SK-N-SH (cell line): ENCODE measurements at regions of chr5 and their contacts with region 1.

Region 1: GRCh38 chr5:15003511-15003920 is 131.9 kb upstream of the ANKH start:
- DNase-seq: peak; percentile 85
- H3K4me3 ChIP-seq: peak overlapping the region in 1 of 2 experiments; percentile 38; a peak in 1 of 4 replicates
- H3K27ac ChIP-seq: no peak overlapping the region
- H3K4me1 ChIP-seq: peaks cover 0 to 7% of the 10 kb centered on the region in 2 experiments; a peak in 3 of 4 replicates
- H3K27me3 ChIP-seq: no peaks in the 10 kb centered on the region
- CTCF ChIP-seq: peak; percentile 89
- EP300 ChIP-seq: no peak
- RAD21 ChIP-seq: peak; percentile 96

Region 2: GRCh38 chr5:14640765-14641164 is 362.8 kb before region 1 on chr5:
- CTCF ChIA-PET with region 1: no interaction called
- POLR2A ChIA-PET with region 1: no interaction called
- DNase-seq: no peak
- H3K4me3 ChIP-seq: no peak overlapping the region
- H3K27ac ChIP-seq: no peak overlapping the region
- H3K4me1 ChIP-seq: no peaks in the 10 kb centered on the region
- H3K27me3 ChIP-seq: peaks cover 6% of the 10 kb centered on the region; the same call in 1 of the 2 replicates
- CTCF ChIP-seq: no peak
- EP300 ChIP-seq: no peak
- RAD21 ChIP-seq: no peak

Region 3: GRCh38 chr5:14685757-14686156 is 317.8 kb before region 1 on chr5:
- CTCF ChIA-PET with region 1: interaction called, 41 read pairs
- POLR2A ChIA-PET with region 1: no interaction called
- DNase-seq: peak; percentile 69
- H3K4me3 ChIP-seq: no peak overlapping the region
- H3K27ac ChIP-seq: no peak overlapping the region; a peak in 1 of 4 replicates
- H3K4me1 ChIP-seq: peaks cover 0 to 11% of the 10 kb centered on the region in 2 experiments; a peak in 2 of 4 replicates
- H3K27me3 ChIP-seq: no peaks in the 10 kb centered on the region
- CTCF ChIP-seq: peak; percentile 73
- EP300 ChIP-seq: no peak
- RAD21 ChIP-seq: peak; percentile 85

Region 4: DNA sequence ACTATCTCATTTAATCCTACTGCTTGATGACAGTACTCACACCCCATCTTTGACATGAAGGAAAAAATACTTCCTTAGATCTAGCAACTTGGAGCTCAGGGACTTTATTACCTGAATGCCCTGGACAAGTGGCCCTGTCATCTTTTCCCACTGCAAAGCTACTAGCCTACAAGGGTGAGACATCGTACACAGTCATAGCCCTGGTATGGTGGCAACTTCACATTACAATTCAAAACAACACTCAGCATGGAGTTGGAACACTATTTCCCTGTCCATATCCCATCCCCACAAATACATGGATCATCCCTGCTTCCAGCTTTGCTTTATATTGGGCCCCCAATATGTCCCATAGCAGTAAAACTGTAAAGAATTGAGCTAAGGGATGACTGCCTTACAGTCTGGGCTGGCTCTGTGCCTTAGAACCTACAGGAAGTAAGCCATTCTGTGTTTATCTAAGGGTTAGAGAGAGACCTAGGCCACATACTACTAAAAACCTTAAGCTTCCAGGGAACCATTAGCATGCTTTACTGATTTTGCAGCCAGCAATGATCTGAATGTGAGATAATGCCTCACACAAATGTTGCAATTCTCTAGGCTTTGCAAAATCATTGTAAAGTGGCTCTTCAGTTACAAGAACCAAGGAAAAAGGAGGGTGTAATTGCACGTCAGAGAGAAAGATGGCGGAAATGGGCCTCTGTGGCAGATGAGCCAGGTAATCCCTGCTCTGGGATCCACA is 283.1 kb before region 1 on chr5:
- CTCF ChIA-PET with region 1: interaction called, 203 read pairs
- POLR2A ChIA-PET with region 1: no interaction called
- DNase-seq: no peak
- H3K4me3 ChIP-seq: no peak overlapping the region
- H3K27ac ChIP-seq: peak overlapping the region in 1 of 2 experiments; percentile 26; a peak in 2 of 4 replicates
- H3K4me1 ChIP-seq: peaks cover 0 to 6% of the 10 kb centered on the region in 2 experiments; a peak in 1 of 4 replicates
- H3K27me3 ChIP-seq: no peaks in the 10 kb centered on the region
- CTCF ChIP-seq: no peak
- EP300 ChIP-seq: no peak
- RAD21 ChIP-seq: no peak

Region 5: GRCh38 chr5:14732991-14733390 is 270.5 kb before region 1 on chr5:
- CTCF ChIA-PET with region 1: interaction called, 203 read pairs
- POLR2A ChIA-PET with region 1: no interaction called
- DNase-seq: no peak
- H3K4me3 ChIP-seq: no peak overlapping the region
- H3K27ac ChIP-seq: no peak overlapping the region
- H3K4me1 ChIP-seq: no peaks in the 10 kb centered on the region
- H3K27me3 ChIP-seq: no peaks in the 10 kb centered on the region
- CTCF ChIP-seq: no peak
- EP300 ChIP-seq: no peak
- RAD21 ChIP-seq: no peak

Region 6: DNA sequence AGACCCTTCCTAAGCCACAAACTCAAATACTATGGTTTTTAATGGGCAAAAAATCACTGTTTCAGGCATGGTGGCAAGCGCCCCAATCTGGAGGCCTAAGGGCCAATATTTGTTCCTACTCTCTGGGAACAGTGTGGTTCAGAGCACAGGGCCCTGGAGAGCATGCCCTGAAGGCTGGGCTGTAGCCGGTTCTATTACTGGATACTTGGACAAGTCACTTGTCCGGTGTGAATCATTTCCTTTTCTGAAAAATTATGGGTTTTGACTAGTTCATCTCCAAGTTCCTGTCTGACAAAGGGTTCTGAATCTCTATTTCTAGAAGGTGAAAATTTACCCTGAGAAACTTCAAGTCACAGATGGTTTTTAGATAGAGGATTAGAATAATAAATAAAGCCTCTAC is 264.0 kb before region 1 on chr5:
- CTCF ChIA-PET with region 1: interaction called, 11 read pairs
- POLR2A ChIA-PET with region 1: no interaction called
- DNase-seq: no peak
- H3K4me3 ChIP-seq: no peak overlapping the region
- H3K27ac ChIP-seq: peak overlapping the region in 1 of 2 experiments; percentile 73; a peak in 2 of 4 replicates
- H3K4me1 ChIP-seq: peaks cover 0 to 25% of the 10 kb centered on the region in 2 experiments; a peak in 2 of 4 replicates
- H3K27me3 ChIP-seq: no peaks in the 10 kb centered on the region
- CTCF ChIP-seq: no peak
- EP300 ChIP-seq: no peak
- RAD21 ChIP-seq: no peak

Region 7: GRCh38 chr5:14871210-14872069 is 132.1 kb before region 1 on chr5 and contains the start of gene ANKH:
- CTCF ChIA-PET with region 1: interaction called, 31 read pairs
- POLR2A ChIA-PET with region 1: no interaction called
- DNase-seq: peak; percentile 94
- H3K4me3 ChIP-seq: peak within 1 kb of the TSS; percentile 69 to 93
- H3K27ac ChIP-seq: peak within 1 kb of the TSS; percentile 56 to 67
- H3K4me1 ChIP-seq: peaks cover 0 to 13% of the 10 kb centered on the region in 2 experiments; a peak in 2 of 4 replicates
- H3K27me3 ChIP-seq: no peaks in the 10 kb centered on the region
- CTCF ChIP-seq: no peak
- EP300 ChIP-seq: peak in 1 of 2 experiments; percentile 46; a peak in 1 of 4 replicates
- RAD21 ChIP-seq: no peak
- polyA plus RNA-seq, gene ANKH: 14.8 and 22.0 TPM in 2 replicates

Region 8: DNA sequence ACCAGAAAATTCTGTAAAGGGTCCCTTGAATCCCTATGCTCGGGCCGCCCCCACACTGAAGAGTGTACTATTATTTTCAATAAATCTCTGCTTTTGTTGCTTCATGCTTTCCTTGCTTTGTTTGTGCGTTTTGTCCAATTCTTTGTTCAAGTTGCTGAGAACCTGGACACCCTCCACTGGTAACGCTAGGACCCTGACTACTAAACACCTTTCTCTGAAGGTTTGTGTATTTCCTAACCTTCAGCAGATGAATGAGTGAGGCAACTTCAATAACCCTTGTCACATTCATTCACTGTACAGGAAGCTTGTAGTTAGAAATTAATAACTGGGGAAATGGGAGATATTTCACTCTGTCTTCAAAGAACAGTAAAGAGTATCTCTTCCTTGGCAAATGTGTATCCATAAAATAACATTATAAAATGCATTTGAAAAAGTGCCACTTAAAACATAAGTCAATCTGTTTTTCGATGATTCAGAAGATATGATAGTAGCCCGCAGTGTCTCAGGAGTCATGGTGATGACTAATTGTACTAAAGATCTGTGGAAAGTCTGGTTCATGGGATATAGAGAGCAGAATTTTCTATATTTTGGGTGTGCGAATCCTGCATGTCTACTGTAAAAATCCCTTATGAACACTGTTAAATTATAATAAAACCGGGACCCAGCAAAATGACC is 88.8 kb before region 1 on chr5:
- CTCF ChIA-PET with region 1: no interaction called
- POLR2A ChIA-PET with region 1: no interaction called
- DNase-seq: no peak
- H3K4me3 ChIP-seq: no peak overlapping the region
- H3K27ac ChIP-seq: peak overlapping the region in 1 of 2 experiments; percentile 87; a peak in 2 of 4 replicates
- H3K4me1 ChIP-seq: peaks cover 15 to 17% of the 10 kb centered on the region in 2 experiments
- H3K27me3 ChIP-seq: no peaks in the 10 kb centered on the region
- CTCF ChIP-seq: no peak
- EP300 ChIP-seq: peak in 1 of 2 experiments; percentile 12; a peak in 1 of 4 replicates
- RAD21 ChIP-seq: no peak

Region 9: GRCh38 chr5:14932984-14933383 is 70.5 kb before region 1 on chr5:
- CTCF ChIA-PET with region 1: no interaction called
- POLR2A ChIA-PET with region 1: no interaction called
- DNase-seq: no peak
- H3K4me3 ChIP-seq: no peak overlapping the region
- H3K27ac ChIP-seq: no peak overlapping the region
- H3K4me1 ChIP-seq: no peaks in the 10 kb centered on the region; a peak in 2 of 4 replicates
- H3K27me3 ChIP-seq: no peaks in the 10 kb centered on the region
- CTCF ChIP-seq: no peak
- EP300 ChIP-seq: no peak
- RAD21 ChIP-seq: no peak

Region 10: GRCh38 chr5:15013654-15014463 is 10.3 kb after region 1 on chr5:
- CTCF ChIA-PET with region 1: interaction called, 29 read pairs
- POLR2A ChIA-PET with region 1: no interaction called
- DNase-seq: peak; percentile 62
- H3K4me3 ChIP-seq: no peak overlapping the region
- H3K27ac ChIP-seq: peak overlapping the region in 1 of 2 experiments; percentile 11; a peak in 1 of 4 replicates
- H3K4me1 ChIP-seq: peaks cover 1 to 13% of the 10 kb centered on the region in 2 experiments
- H3K27me3 ChIP-seq: no peaks in the 10 kb centered on the region
- CTCF ChIP-seq: peak; percentile 76
- EP300 ChIP-seq: no peak
- RAD21 ChIP-seq: peak; percentile 83